K562 (cell line): ENCODE measurements at regions of chr13 and their contacts with region 1.

Region 1: GRCh38 chr13:60214213-60215055 is 50.7 kb upstream of the DIAPH3 start:
- DNase-seq: no peak
- ATAC-seq: peak; percentile 38; the same call in 2 of the 3 replicates
- H3K4me3 ChIP-seq: no peak overlapping the region
- H3K27ac ChIP-seq: no peak overlapping the region
- H3K4me1 ChIP-seq: peaks cover 0 to 6% of the 10 kb centered on the region in 2 experiments; a peak in 1 of 5 replicates
- H3K27me3 ChIP-seq: no peaks in the 10 kb centered on the region
- CTCF ChIP-seq: no peak
- EP300 ChIP-seq: peak; percentile 57; the same call in 1 of the 2 replicates
- POLR2A ChIP-seq: no peak
- RAD21 ChIP-seq: no peak

Region 2: GRCh38 chr13:60163478-60164233 is 50.8 kb before region 1 on chr13 and contains the start of gene DIAPH3:
- CTCF ChIA-PET with region 1: no interaction called
- POLR2A ChIA-PET with region 1: no interaction called
- in situ Hi-C with region 1: no loop called
- intact Hi-C with region 1: loop called (anchors 2 kb)
- DNase-seq: peak; percentile 88 to 95 (median 90)
- ATAC-seq: peak; percentile 99
- H3K4me3 ChIP-seq: peak within 1 kb of the TSS; percentile 70
- H3K27ac ChIP-seq: peak within 1 kb of the TSS; percentile 82
- H3K4me1 ChIP-seq: peaks cover 0 to 10% of the 10 kb centered on the region in 2 experiments; a peak in 3 of 5 replicates
- H3K27me3 ChIP-seq: no peaks in the 10 kb centered on the region
- CTCF ChIP-seq: no peak
- EP300 ChIP-seq: no peak; the same call in 1 of the 2 replicates
- POLR2A ChIP-seq: peak; percentile 86
- RAD21 ChIP-seq: no peak
- polyA plus RNA-seq, gene DIAPH3: 10.0 to 10.6 TPM